HEK293 (cell line): ENCODE measurements at regions of chr9 and their contacts with region 1.

Region 1: GRCh38 chr9:68489646-68490045 is 51.0 kb downstream of the TMEM252 start:
- H3K4me3 ChIP-seq: no peak overlapping the region
- H3K27ac ChIP-seq: no peak overlapping the region
- H3K4me1 ChIP-seq: no peaks in the 10 kb centered on the region
- CTCF ChIP-seq: no peak

Region 2: DNA sequence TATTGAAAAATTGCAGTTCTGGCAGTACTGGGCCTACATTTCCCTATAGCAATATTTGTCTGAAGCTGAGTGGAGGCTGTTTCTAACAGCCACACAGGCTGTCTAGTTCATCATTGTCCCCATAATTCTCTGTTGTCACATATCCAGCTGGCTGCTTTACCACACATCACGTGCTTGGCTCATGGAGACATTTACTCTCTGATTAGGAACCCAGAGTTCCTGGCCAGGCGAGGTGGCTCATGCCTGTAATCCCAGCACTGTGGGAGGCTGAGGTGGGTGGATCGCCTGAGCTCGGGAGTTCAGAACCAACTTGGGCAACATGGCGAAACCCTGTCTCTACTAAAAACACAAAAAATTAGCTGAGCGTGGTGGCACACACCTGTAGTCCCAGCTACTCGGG is 51.9 kb before region 1 on chr9:
- CTCF ChIA-PET with region 1: no interaction called
- POLR2A ChIA-PET with region 1: no interaction called
- H3K4me3 ChIP-seq: no peak overlapping the region
- H3K27ac ChIP-seq: no peak overlapping the region
- H3K4me1 ChIP-seq: no peaks in the 10 kb centered on the region
- CTCF ChIP-seq: no peak

Region 3: GRCh38 chr9:68507130-68507805 is 17.6 kb after region 1 on chr9:
- CTCF ChIA-PET with region 1: interaction called, 13 read pairs
- POLR2A ChIA-PET with region 1: no interaction called
- H3K4me3 ChIP-seq: no peak overlapping the region
- H3K27ac ChIP-seq: no peak overlapping the region
- H3K4me1 ChIP-seq: no peaks in the 10 kb centered on the region
- CTCF ChIP-seq: no peak

Region 4: GRCh38 chr9:68631811-68632210 is 142.2 kb after region 1 on chr9:
- CTCF ChIA-PET with region 1: no interaction called
- POLR2A ChIA-PET with region 1: no interaction called
- H3K4me3 ChIP-seq: no peak overlapping the region
- H3K27ac ChIP-seq: no peak overlapping the region
- H3K4me1 ChIP-seq: no peaks in the 10 kb centered on the region
- CTCF ChIP-seq: no peak